Vagina (tissue), 2 donors: ENCODE measurements at regions of chr3 and their contacts with region 1.

Region 1: GRCh38 chr3:50388016-50388719 is 28.8 kb upstream of the TMEM115 start:
- DNase-seq: no peak
- H3K4me3 ChIP-seq: no peak overlapping the region
- H3K27ac ChIP-seq: no peak overlapping the region
- H3K4me1 ChIP-seq: peaks cover 8% of the 10 kb centered on the region
- H3K27me3 ChIP-seq: no peaks in the 10 kb centered on the region
- CTCF ChIP-seq: no peak
- POLR2A ChIP-seq: no peak

Region 2: GRCh38 chr3:48521635-48522034 is 1866.5 kb before region 1 on chr3:
- intact Hi-C with region 1: loop called (anchors 5 kb)
- DNase-seq: no peak
- H3K4me3 ChIP-seq: no peak overlapping the region
- H3K27ac ChIP-seq: no peak overlapping the region
- H3K4me1 ChIP-seq: no peaks in the 10 kb centered on the region
- H3K27me3 ChIP-seq: no peaks in the 10 kb centered on the region
- CTCF ChIP-seq: no peak
- POLR2A ChIP-seq: no peak

Region 3: DNA sequence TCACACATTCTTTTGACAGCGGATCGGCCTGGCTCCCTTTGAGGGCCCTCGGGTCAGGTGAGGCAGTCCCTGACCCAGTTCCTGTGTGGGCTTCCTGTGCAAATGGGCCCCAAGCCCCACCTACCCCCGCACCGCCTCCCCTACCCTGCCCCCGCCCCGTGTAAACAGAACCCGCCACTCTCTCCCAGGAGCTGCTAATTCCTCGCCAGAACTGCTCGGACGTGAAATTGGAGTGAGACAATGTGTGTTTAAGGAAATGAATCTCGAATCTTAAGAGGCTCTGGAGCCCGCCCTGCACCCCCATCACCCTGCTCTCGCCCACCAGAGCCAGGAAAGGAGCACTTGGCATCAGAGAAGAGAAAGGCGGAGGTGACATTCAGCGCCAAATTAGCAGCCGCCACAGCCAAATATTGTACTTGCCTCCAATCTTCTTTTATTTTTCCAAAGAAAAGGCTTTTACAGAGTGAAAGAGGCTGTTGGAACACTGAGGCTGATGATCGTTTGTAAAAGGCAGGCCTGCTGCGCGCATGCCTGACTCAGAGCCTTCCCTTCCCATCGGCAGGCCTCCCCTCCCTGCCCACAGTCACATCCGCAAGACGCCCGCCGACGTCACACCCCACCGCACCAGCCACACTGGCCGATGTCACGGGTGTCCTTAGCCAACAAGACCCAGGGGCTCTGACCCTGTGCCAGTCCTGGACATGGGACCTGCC is 62.2 kb after region 1 on chr3:
- intact Hi-C with region 1: no loop called
- DNase-seq: no peak
- H3K4me3 ChIP-seq: peak overlapping the region in 1 of 2 donors; percentile 23
- H3K27ac ChIP-seq: peak overlapping the region; percentile 48
- H3K4me1 ChIP-seq: peaks cover 5% of the 10 kb centered on the region
- H3K27me3 ChIP-seq: no peaks in the 10 kb centered on the region
- CTCF ChIP-seq: no peak
- POLR2A ChIP-seq: no peak